ENCODE measurements at regions of chr2 and their contacts with region 1.

Region 1: GRCh38 chr2:161586517-161587167 is 37.6 kb upstream of the SLC4A10 start:
- DNase-seq: peak; percentile 28
- CTCF ChIP-seq: peak; percentile 64

Region 2: DNA sequence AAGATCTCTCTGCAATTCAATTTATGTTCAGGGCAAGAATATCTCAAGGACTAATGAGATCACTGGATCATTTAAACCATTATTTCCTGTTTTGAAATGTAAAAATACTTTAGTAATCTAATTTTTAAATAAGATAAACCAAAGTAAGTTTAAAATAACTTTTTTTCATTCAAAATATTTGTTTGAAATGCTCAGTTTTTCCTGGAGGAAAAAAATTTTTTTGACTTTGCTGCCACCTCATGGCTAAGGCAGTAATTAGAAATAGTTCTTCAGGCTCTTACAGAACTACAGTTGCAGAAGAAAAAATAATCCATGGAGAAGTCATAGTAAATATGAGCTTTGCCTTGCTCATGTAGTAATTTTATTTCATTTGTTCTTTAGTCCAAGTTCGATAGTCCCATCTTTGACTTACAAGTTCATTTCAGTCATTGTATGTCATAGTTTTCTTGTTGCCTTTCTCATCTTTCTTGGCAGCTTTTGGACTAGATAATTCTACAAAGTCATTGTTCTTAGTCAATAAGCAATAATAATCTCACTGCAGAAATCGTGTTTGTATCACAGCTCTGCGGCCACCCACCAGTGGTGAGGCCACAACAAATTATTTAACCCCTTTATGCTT is 360.0 kb after region 1 on chr2:
- in situ Hi-C with region 1: loop called (anchors 25 kb)
- DNase-seq: no peak
- CTCF ChIP-seq: peak; percentile 54

Region 3: GRCh38 chr2:162301151-162301804 is 714.6 kb after region 1 on chr2:
- in situ Hi-C with region 1: no loop called
- DNase-seq: no peak
- CTCF ChIP-seq: peak; percentile 78

Measured in GM13977 (cell line).